ENCODE measurements at regions of chr12 and their contacts with region 1.

Region 1: DNA sequence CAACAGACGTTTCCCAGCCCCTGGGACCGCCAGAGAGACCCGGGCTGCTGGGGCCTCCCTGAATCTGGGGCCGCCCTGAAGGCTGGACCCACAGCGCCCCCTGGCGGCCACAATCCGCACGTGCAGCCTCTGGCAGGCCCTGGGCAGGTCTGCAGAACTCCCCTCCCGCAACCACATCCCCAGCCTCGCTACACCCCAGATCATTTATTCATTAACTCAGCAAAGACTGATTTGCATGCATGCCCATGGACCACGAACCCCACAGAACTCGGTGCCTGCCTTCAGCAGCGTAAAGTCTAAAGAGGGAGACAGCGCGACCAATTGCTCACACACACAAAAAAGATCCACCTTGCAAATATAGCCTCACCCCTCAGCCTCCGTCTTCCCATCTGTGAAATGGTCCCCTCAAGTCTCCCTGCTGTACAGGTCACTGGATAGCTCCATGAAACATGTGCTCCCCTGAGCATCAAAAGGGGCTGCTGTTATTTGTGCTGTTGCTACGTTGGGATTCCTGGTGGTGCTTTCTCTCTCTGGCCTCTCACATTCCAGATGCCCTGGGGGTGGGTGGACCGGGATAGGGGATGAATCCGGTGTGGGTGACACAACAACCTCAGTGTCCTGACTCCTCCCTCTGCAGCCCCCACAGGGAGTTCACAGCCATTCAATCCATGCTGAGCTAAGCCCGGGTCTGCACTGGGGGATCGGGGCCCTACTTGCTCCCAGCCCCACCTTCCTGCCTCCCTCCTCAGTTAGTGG is 96.4 kb downstream of the SCARB1 start:
- DNase-seq: peak; percentile 72 to 94 (median 83)
- ATAC-seq: peak; percentile 89
- H3K4me3 ChIP-seq: no peak overlapping the region
- H3K4me3 Mint-ChIP-seq: no peak overlapping the region
- H3K27ac ChIP-seq: no peak overlapping the region
- H3K27ac Mint-ChIP-seq: peak overlapping the region; percentile 24
- H3K4me1 ChIP-seq: peaks cover 8% of the 10 kb centered on the region
- H3K4me1 Mint-ChIP-seq: peaks cover 23% of the 10 kb centered on the region
- H3K27me3 ChIP-seq: peaks cover 1 to 3% of the 10 kb centered on the region in 2 experiments
- H3K27me3 Mint-ChIP-seq: peaks cover 4% of the 10 kb centered on the region
- CTCF ChIP-seq: peak; percentile 99

Region 2: DNA sequence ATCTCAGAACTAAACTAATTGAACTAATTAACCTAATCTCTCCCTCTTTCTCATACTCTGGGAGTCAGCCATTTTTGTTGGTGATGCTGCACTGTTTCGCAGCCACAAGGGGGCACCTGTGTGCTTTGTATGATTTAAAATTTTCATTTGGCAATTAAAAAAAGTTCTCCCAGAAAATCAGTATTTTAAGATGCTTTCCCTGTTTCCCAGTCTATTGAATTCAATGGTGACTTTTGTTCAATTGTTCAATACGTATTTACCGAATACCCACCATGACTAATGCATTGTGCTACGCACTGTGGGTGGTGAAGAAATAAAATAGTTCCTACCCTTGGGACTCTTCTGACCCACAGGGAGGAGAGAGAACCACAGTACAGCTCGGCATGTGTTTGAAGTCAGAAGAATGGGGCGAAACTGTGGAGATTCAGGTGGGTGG is 730.6 kb before region 1 on chr12:
- CTCF ChIA-PET with region 1: interaction called, 161 read pairs
- POLR2A ChIA-PET with region 1: no interaction called
- intact Hi-C with region 1: loop called (anchors 1 kb)
- DNase-seq: peak in 7 of 9 experiments; percentile 20 to 69 (median 52)
- ATAC-seq: no peak
- H3K4me3 ChIP-seq: no peak overlapping the region
- H3K4me3 Mint-ChIP-seq: no peak overlapping the region
- H3K27ac ChIP-seq: no peak overlapping the region
- H3K27ac Mint-ChIP-seq: no peak overlapping the region
- H3K4me1 ChIP-seq: no peaks in the 10 kb centered on the region
- H3K4me1 Mint-ChIP-seq: no peaks in the 10 kb centered on the region
- H3K27me3 ChIP-seq: no peaks in the 10 kb centered on the region
- H3K27me3 Mint-ChIP-seq: no peaks in the 10 kb centered on the region
- CTCF ChIP-seq: peak; percentile 99

Region 3: DNA sequence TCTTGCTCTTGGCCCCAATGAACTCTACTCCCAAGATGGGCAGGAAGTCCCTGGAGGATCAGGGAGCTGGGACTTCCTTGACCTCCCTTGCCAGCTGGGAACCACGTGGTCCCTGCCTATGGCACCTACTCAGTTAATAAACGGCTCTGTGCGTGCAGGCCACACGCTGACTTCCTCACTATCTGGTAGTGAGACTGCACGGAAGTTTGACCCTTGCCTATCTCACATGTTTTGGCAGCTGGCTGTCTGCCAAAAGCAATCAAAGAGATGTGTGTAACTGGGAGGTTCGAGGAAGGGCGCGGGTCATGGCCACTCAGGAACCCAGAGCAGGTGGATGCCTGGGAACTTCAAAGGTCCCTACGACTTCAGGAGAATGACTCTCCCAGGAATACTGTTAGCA is 414.4 kb before region 1 on chr12:
- CTCF ChIA-PET with region 1: interaction called, 20 read pairs
- POLR2A ChIA-PET with region 1: no interaction called
- intact Hi-C with region 1: loop called in 1 of 2 experiments (anchors 1 kb)
- DNase-seq: no peak
- ATAC-seq: no peak
- H3K4me3 ChIP-seq: no peak overlapping the region
- H3K4me3 Mint-ChIP-seq: no peak overlapping the region
- H3K27ac ChIP-seq: no peak overlapping the region
- H3K27ac Mint-ChIP-seq: no peak overlapping the region
- H3K4me1 ChIP-seq: no peaks in the 10 kb centered on the region
- H3K4me1 Mint-ChIP-seq: no peaks in the 10 kb centered on the region
- H3K27me3 ChIP-seq: no peaks in the 10 kb centered on the region
- H3K27me3 Mint-ChIP-seq: no peaks in the 10 kb centered on the region
- CTCF ChIP-seq: no peak

Region 4: DNA sequence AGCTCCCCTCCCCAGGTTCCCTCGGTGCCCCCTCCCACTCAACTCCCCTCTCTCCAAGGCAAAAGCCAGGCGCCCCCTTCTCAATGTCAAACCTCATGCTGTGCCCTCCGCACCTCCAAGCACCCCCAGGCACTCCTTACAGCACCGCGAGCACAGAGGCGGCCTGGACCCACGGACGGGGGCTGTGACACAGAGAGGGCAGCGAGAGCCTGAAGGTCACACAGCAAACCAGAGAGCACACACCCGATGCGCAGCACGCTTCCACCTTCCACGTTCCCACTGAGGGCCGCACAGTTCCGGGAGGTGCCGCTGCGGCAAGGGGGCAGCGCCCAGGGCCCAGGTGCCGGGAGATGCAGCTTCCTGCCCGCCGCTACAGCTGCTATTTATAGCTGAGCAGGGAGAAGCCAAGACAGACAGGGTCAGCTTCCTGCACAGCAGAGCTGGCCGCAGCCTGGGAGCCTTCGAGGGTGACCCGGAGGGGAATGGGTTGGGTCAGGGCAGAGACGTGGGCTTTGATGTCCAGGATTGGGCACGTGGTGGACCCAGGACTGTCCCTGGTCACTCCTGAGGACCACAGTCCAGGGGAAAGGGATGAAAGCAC is 212.7 kb before region 1 on chr12:
- CTCF ChIA-PET with region 1: interaction called, 19 read pairs
- POLR2A ChIA-PET with region 1: no interaction called
- intact Hi-C with region 1: loop called (anchors 1 kb)
- DNase-seq: peak in 1 of 9 experiments; percentile 31
- ATAC-seq: peak; percentile 50
- H3K4me3 ChIP-seq: peak overlapping the region in 1 of 2 experiments; percentile 41
- H3K4me3 Mint-ChIP-seq: peak overlapping the region; percentile 42
- H3K27ac ChIP-seq: no peak overlapping the region
- H3K27ac Mint-ChIP-seq: no peak overlapping the region
- H3K4me1 ChIP-seq: peaks cover 45% of the 10 kb centered on the region
- H3K4me1 Mint-ChIP-seq: peaks cover 65% of the 10 kb centered on the region
- H3K27me3 ChIP-seq: no peaks in the 10 kb centered on the region
- H3K27me3 Mint-ChIP-seq: no peaks in the 10 kb centered on the region
- CTCF ChIP-seq: no peak

Region 5: DNA sequence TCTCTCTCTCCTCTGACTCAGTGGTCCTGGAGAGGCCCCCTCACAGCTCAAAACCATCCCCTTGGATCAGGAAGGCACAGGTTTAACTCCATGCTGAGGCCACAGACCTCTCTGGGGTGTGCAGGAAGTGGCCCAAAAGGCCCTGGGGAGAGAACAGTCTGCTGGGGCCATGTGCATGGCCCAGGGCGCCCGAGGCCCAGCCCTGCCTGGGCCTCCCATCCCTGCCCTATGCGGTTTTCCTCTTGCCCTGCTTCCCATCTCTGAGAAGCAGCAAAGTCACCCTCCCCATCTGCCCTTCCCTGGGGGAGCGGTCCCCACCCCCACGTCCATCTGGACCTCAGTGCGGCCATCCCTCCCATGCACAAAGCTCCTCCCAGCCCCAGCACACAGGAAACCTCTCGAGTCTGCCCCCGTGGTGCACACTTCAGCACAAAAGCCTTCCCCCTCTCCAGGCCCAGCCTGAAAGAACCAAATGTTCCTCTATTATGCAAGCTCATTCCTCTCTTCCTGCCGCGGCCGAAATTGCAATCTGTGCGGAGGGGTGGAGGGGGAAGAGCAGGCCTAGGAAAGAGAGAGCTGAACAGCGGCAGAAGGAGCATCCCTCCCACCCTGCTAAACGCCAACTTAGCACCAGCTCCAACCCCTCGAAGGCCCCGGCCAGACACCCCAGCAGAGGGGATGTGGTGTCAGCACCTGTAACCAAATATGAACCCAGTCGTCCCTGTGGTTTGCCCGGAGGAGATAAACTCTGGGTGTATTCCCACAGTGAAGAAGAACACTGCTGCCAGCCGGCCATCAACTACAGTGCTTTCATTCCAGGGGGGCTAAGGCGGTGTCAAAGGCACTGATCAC is 12.1 kb before region 1 on chr12:
- CTCF ChIA-PET with region 1: interaction called, 15 read pairs
- POLR2A ChIA-PET with region 1: no interaction called
- intact Hi-C with region 1: no loop called
- DNase-seq: peak in 6 of 9 experiments; percentile 20 to 74 (median 44)
- ATAC-seq: peak; percentile 79
- H3K4me3 ChIP-seq: peak overlapping the region in 1 of 2 experiments; percentile 17
- H3K4me3 Mint-ChIP-seq: peak overlapping the region; percentile 33
- H3K27ac ChIP-seq: peak overlapping the region in 1 of 2 experiments; percentile 44
- H3K27ac Mint-ChIP-seq: peak overlapping the region; percentile 60
- H3K4me1 ChIP-seq: peaks cover 18% of the 10 kb centered on the region
- H3K4me1 Mint-ChIP-seq: peaks cover 21% of the 10 kb centered on the region
- H3K27me3 ChIP-seq: no peaks in the 10 kb centered on the region
- H3K27me3 Mint-ChIP-seq: no peaks in the 10 kb centered on the region
- CTCF ChIP-seq: no peak

Region 6: DNA sequence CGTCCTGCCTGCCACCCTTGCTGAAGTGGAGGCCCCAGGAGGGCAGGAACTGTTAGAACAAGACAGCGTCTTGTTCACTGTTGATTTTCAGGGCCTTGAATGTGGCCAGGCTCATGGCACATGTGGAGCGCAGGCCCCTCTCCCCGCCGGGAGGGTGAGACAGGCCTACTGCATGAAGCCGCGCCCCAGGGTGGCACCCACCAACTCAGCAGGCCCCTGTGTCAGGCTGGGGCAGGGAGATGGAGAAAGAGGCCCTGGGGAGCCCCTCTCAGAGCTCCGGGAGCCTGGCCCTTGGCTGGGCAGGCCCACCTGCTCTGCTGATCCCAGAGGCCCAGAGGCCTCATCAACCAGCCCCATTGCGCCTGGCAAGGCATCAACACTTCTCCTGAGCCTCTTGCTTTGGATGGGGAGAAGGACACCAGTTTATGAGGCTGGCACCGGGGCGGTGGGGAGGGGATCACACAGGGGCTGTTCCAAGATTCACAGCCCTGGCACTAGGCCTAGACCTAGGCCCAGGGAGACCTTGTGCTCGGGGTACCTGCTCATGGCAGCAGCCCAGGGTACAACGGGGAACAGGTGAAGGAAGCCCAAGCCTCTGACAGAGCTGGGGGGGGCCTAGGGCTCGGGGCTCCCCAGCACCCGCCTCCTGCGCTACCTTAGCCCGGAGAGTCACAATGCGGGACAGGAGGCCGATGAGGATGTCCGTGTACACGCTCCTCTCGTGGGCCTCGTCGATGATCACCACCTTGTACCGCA is 203.6 kb after region 1 on chr12:
- CTCF ChIA-PET with region 1: no interaction called
- POLR2A ChIA-PET with region 1: no interaction called
- intact Hi-C with region 1: no loop called
- DNase-seq: no peak
- ATAC-seq: no peak
- H3K4me3 ChIP-seq: no peak overlapping the region
- H3K4me3 Mint-ChIP-seq: no peak overlapping the region
- H3K27ac ChIP-seq: no peak overlapping the region
- H3K27ac Mint-ChIP-seq: no peak overlapping the region
- H3K4me1 ChIP-seq: no peaks in the 10 kb centered on the region
- H3K4me1 Mint-ChIP-seq: no peaks in the 10 kb centered on the region
- H3K27me3 ChIP-seq: no peaks in the 10 kb centered on the region
- H3K27me3 Mint-ChIP-seq: no peaks in the 10 kb centered on the region
- CTCF ChIP-seq: no peak